ENCODE measurements at regions of chr12 and their contacts with region 1.

Region 1: GRCh38 chr12:48795480-48796455 is 6.9 kb upstream of the ADCY6 start:
- DNase-seq: peak in 26 of 35 experiments; percentile 15 to 77 (median 39)
- ATAC-seq: peak; percentile 65 to 82 (median 78)
- H3K4me3 ChIP-seq: no peak overlapping the region
- H3K4me3 Mint-ChIP-seq: no peak overlapping the region
- H3K27ac ChIP-seq: no peak overlapping the region
- H3K27ac Mint-ChIP-seq: no peak overlapping the region
- H3K4me1 ChIP-seq: peaks cover 0 to 4% of the 10 kb centered on the region in 2 experiments
- H3K4me1 Mint-ChIP-seq: peaks cover 0 to 2% (median 1%) of the 10 kb centered on the region in 3 donors
- H3K27me3 ChIP-seq: peaks cover 0 to 26% of the 10 kb centered on the region in 2 experiments
- H3K27me3 Mint-ChIP-seq: peaks cover 0 to 13% of the 10 kb centered on the region in 2 donors

Region 2: GRCh38 chr12:48750769-48751735 is 44.7 kb before region 1 on chr12:
- CTCF ChIA-PET with region 1: interaction called, 23 to 44 read pairs
- POLR2A ChIA-PET with region 1: interaction called in 1 of 2 experiments, 10 read pairs
- DNase-seq: no peak
- ATAC-seq: no peak
- H3K4me3 ChIP-seq: no peak overlapping the region
- H3K4me3 Mint-ChIP-seq: no peak overlapping the region
- H3K27ac ChIP-seq: no peak overlapping the region
- H3K27ac Mint-ChIP-seq: no peak overlapping the region
- H3K4me1 ChIP-seq: no peaks in the 10 kb centered on the region
- H3K4me1 Mint-ChIP-seq: no peaks in the 10 kb centered on the region
- H3K27me3 ChIP-seq: no peaks in the 10 kb centered on the region
- H3K27me3 Mint-ChIP-seq: no peaks in the 10 kb centered on the region

Region 3: GRCh38 chr12:48758221-48758620 is 37.5 kb before region 1 on chr12:
- CTCF ChIA-PET with region 1: interaction called, 23 to 44 read pairs
- POLR2A ChIA-PET with region 1: interaction called in 1 of 2 experiments, 10 read pairs
- DNase-seq: no peak
- ATAC-seq: no peak
- H3K4me3 ChIP-seq: no peak overlapping the region
- H3K4me3 Mint-ChIP-seq: no peak overlapping the region
- H3K27ac ChIP-seq: no peak overlapping the region
- H3K27ac Mint-ChIP-seq: no peak overlapping the region
- H3K4me1 ChIP-seq: no peaks in the 10 kb centered on the region
- H3K4me1 Mint-ChIP-seq: no peaks in the 10 kb centered on the region
- H3K27me3 ChIP-seq: no peaks in the 10 kb centered on the region
- H3K27me3 Mint-ChIP-seq: no peaks in the 10 kb centered on the region

Measured in T-cell (primary cell).